Calu3 (cell line): ENCODE measurements at regions of chr9 and their contacts with region 1.

Region 1: DNA sequence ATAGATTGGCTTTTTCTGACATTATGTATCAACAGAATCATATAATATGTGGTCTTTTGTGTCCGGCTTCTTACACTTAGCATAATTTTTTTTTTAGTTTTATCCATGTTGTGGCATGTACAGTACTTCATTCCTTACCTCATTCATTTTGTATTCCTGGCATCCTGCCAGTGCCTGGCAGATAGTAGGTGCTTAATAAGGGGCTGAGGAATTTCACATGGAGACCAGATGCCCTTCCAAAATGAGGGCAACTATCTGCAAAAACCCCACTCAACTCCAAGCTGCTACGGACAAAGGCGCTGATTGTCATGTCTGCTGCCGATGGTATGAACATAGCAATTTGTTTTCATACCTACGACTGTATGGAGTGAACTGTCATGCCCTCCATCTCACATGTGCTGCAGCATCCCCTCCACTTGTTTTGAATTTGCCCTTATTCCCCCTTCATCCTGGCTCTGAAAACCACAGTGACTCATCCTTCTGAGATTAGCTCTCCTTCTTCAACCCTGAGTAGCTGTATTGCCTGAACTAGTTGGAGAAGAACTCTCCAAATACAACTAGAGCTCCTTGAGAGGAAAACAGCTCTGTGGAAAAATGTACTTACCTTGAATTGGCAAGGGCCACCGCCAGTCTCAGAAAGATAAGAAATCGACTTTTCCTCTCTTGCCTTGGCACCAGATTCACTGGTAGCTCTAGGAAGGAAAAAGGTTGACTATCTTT is 41.3 kb upstream of the FOXE1 start:
- DNase-seq: no peak
- H3K4me3 Mint-ChIP-seq: no peak overlapping the region
- H3K27ac Mint-ChIP-seq: peak overlapping the region; percentile 75
- H3K4me1 Mint-ChIP-seq: peaks cover 21% of the 10 kb centered on the region
- H3K27me3 Mint-ChIP-seq: no peaks in the 10 kb centered on the region
- CTCF ChIP-seq: no peak

Region 2: GRCh38 chr9:97830884-97831829 is 19.5 kb after region 1 on chr9:
- CTCF ChIA-PET with region 1: no interaction called
- intact Hi-C with region 1: loop called (anchors 1 kb)
- DNase-seq: no peak
- H3K4me3 Mint-ChIP-seq: no peak overlapping the region
- H3K27ac Mint-ChIP-seq: no peak overlapping the region
- H3K4me1 Mint-ChIP-seq: peaks cover 10% of the 10 kb centered on the region
- H3K27me3 Mint-ChIP-seq: no peaks in the 10 kb centered on the region
- CTCF ChIP-seq: no peak